Activated CD4-positive, alpha-beta memory T cell treated with anti-CD3 and anti-CD28 coated beads for 36 hours (primary cell): ENCODE measurements at regions of chr19 and their contacts with region 1.

Region 1: DNA sequence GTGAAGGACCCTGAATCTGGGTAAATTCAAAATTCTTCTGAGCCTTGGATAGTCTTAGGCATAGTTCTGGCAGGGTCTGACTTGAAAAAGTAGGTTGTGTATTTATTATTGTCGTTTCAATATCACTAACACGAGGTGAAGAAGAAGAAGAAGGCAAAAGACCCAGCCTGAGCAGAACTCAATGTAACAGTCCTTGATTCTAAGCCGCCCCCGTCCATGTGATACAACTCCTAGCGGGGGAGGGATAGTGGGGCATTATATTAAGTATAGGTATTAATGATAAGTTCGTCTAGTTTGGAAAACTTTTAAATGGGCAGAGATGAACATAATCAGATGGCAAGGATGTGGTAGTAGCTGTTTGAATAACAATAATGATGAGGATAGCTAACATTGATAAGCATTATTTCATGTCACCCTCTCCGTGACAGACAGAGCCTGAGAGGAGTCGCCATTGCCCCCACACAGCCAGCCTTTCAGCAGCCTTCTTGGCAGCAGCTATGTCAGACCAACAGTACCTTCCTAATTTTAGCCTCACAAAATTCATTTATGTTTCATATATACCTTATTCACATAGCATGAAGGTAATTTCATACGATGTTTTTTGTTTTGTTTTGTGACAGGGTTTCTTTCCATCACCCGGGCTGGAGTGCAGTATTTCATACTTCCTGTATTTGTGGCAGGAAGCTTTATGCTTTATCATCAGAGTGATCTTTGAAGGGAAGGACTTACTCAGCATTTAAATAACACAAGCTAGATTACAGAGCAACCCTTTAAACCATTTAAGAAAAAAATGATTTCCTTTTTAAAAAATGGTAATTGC is 64.4 kb upstream of the NPAS1 start:
- DNase-seq: peak; percentile 46
- H3K4me3 Mint-ChIP-seq: peak overlapping the region; percentile 75
- H3K27ac Mint-ChIP-seq: peak overlapping the region; percentile 82
- H3K4me1 Mint-ChIP-seq: peaks cover 79% of the 10 kb centered on the region
- H3K27me3 Mint-ChIP-seq: no peaks in the 10 kb centered on the region

Region 2: GRCh38 chr19:46886546-46887239 is 68.5 kb before region 1 on chr19:
- CTCF ChIA-PET with region 1: no interaction called
- POLR2A ChIA-PET with region 1: no interaction called
- intact Hi-C with region 1: loop called (anchors 2 kb)
- DNase-seq: no peak
- H3K4me3 Mint-ChIP-seq: no peak overlapping the region
- H3K27ac Mint-ChIP-seq: peak overlapping the region; percentile 51
- H3K4me1 Mint-ChIP-seq: peaks cover 44% of the 10 kb centered on the region
- H3K27me3 Mint-ChIP-seq: no peaks in the 10 kb centered on the region

Region 3: GRCh38 chr19:46932346-46932745 is 22.9 kb before region 1 on chr19:
- CTCF ChIA-PET with region 1: no interaction called
- POLR2A ChIA-PET with region 1: interaction called, 3 read pairs
- intact Hi-C with region 1: loop called (anchors 2 kb)
- DNase-seq: no peak
- H3K4me3 Mint-ChIP-seq: no peak overlapping the region
- H3K27ac Mint-ChIP-seq: no peak overlapping the region
- H3K4me1 Mint-ChIP-seq: peaks cover 66% of the 10 kb centered on the region
- H3K27me3 Mint-ChIP-seq: no peaks in the 10 kb centered on the region

Region 4: GRCh38 chr19:46990991-46991676 is 35.9 kb after region 1 on chr19:
- CTCF ChIA-PET with region 1: interaction called, 12 read pairs
- POLR2A ChIA-PET with region 1: no interaction called
- intact Hi-C with region 1: loop called (anchors 5 kb)
- DNase-seq: peak; percentile 76
- H3K4me3 Mint-ChIP-seq: no peak overlapping the region
- H3K27ac Mint-ChIP-seq: peak overlapping the region; percentile 34
- H3K4me1 Mint-ChIP-seq: peaks cover 10% of the 10 kb centered on the region
- H3K27me3 Mint-ChIP-seq: no peaks in the 10 kb centered on the region

Region 5: GRCh38 chr19:47019431-47020041 is 64.3 kb after region 1 on chr19 and contains the start of gene NPAS1:
- CTCF ChIA-PET with region 1: no interaction called
- POLR2A ChIA-PET with region 1: no interaction called
- intact Hi-C with region 1: no loop called
- DNase-seq: no peak
- H3K4me3 Mint-ChIP-seq: no peak within 1 kb of the TSS
- H3K27ac Mint-ChIP-seq: no peak within 1 kb of the TSS
- H3K4me1 Mint-ChIP-seq: peaks cover 15% of the 10 kb centered on the region
- H3K27me3 Mint-ChIP-seq: peaks cover 34% of the 10 kb centered on the region
- total RNA-seq, gene NPAS1: not detected

Region 6: GRCh38 chr19:47047763-47048405 is 92.7 kb after region 1 on chr19:
- CTCF ChIA-PET with region 1: no interaction called
- POLR2A ChIA-PET with region 1: no interaction called
- intact Hi-C with region 1: loop called (anchors 5 kb)
- DNase-seq: peak; percentile 91
- H3K4me3 Mint-ChIP-seq: peak overlapping the region; percentile 99
- H3K27ac Mint-ChIP-seq: peak overlapping the region; percentile 87
- H3K4me1 Mint-ChIP-seq: peaks cover 12% of the 10 kb centered on the region
- H3K27me3 Mint-ChIP-seq: peaks cover 1% of the 10 kb centered on the region